ENCODE measurements at regions of chr22 and their contacts with region 1.

Region 1: GRCh38 chr22:38744981-38745380 is 10.8 kb downstream of the SUN2 start:
- DNase-seq: no peak
- H3K4me3 ChIP-seq: no peak overlapping the region
- H3K27ac ChIP-seq: no peak overlapping the region
- H3K4me1 ChIP-seq: no peaks in the 10 kb centered on the region
- H3K27me3 ChIP-seq: no peaks in the 10 kb centered on the region
- CTCF ChIP-seq: no peak
- POLR2A ChIP-seq: no peak

Region 2: DNA sequence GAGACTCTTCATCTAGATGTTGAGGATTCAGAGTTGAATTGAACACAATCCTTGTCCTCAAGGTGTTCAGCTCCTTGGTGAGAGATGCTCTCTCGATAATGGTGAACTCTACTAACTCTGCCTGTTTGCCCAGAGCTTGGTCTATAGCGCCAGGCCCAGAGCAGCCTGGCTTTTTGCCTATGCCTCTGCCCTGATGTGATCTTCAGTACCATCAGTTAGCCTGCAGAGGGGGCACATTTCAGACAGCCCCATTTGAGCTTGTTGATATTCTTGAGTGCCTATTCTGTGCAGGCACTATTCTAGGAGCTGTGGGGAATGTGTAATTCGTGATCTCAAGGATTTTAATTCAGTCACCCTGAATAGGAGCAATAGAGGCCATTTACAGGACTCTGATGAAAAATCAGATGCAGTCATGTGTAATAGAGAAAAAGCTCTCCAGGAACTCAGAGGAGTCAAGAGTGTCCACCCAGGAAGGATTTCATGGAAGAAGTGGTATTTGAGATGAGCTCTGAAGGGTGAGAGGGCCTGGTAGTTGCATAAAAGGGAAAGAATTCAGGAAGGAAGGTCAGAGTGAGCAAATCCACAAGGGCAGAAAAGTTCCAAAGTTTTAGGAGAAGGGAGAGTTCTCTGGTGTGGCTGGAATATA is 19.9 kb before region 1 on chr22:
- CTCF ChIA-PET with region 1: interaction called, 10 read pairs
- POLR2A ChIA-PET with region 1: no interaction called
- dilution Hi-C with region 1: no loop called
- intact Hi-C with region 1: no loop called
- DNase-seq: peak; percentile 50
- H3K4me3 ChIP-seq: no peak overlapping the region
- H3K27ac ChIP-seq: no peak overlapping the region
- H3K4me1 ChIP-seq: no peaks in the 10 kb centered on the region
- H3K27me3 ChIP-seq: no peaks in the 10 kb centered on the region
- CTCF ChIP-seq: peak; percentile 61 to 65
- POLR2A ChIP-seq: no peak

Region 3: DNA sequence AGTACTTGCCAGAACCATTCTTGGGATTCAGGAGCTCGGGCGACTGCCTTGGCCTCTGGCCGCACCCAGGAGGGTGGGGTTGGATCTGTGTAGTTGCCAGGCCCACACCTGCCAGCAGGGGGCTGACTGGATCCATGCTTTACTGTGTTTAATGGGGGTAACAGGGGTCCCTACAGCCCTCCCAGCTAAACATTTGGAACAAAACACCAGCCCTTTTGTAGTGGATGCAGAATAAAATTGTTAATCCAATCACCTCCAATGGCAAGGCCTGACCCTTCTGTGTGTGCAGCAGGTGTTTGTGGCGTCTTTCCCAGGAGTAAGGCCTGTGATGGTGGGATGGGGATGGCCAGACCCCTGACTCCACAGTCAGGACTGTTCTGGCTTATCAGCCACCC is 11.7 kb before region 1 on chr22:
- CTCF ChIA-PET with region 1: interaction called, 11 read pairs
- POLR2A ChIA-PET with region 1: no interaction called
- dilution Hi-C with region 1: no loop called
- intact Hi-C with region 1: no loop called
- DNase-seq: peak; percentile 19
- H3K4me3 ChIP-seq: no peak overlapping the region
- H3K27ac ChIP-seq: no peak overlapping the region
- H3K4me1 ChIP-seq: no peaks in the 10 kb centered on the region
- H3K27me3 ChIP-seq: no peaks in the 10 kb centered on the region
- CTCF ChIP-seq: peak; percentile 75 to 79
- POLR2A ChIP-seq: no peak

Measured in endothelial cell of umbilical vein (primary cell).